ENCODE measurements at regions of chr1 and their contacts with region 1.

Region 1: DNA sequence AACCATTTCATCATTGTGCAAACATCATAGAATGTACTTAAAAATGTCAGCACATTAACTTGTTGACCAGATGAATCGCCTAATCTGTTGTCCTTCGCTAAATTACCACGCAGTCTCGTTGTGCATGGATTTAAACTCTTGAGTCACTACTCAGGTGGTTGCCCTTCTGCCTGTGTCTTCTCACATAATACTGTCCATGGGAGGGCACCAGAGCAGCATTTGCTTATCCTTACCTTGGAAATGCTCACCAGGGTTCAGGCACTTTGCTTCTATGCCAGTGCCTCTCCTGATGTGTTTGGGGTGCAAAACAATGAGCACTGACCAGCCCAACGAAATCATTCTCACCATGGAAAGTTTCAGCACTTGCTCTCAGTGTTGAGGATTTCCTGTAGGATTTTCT is 559.9 kb downstream of the RWDD3 start:
- DNase-seq: no peak
- ATAC-seq: no peak
- H3K4me3 ChIP-seq: no peak overlapping the region
- H3K27ac ChIP-seq: no peak overlapping the region
- H3K4me1 ChIP-seq: no peaks in the 10 kb centered on the region
- H3K27me3 ChIP-seq: no peaks in the 10 kb centered on the region
- CTCF ChIP-seq: 0 out of 2 replicates have a peak, but pooled peaks have one; percentile 13
- POLR2A ChIP-seq: no peak
- RAD21 ChIP-seq: no peak

Region 2: GRCh38 chr1:95744731-95745130 is 49.2 kb before region 1 on chr1:
- CTCF ChIA-PET with region 1: no interaction called
- POLR2A ChIA-PET with region 1: no interaction called
- dilution Hi-C with region 1: no loop called
- in situ Hi-C with region 1: no loop called
- intact Hi-C with region 1: loop called (anchors 5 kb)
- DNase-seq: no peak
- ATAC-seq: no peak
- H3K4me3 ChIP-seq: no peak overlapping the region
- H3K27ac ChIP-seq: no peak overlapping the region
- H3K4me1 ChIP-seq: no peaks in the 10 kb centered on the region
- H3K27me3 ChIP-seq: no peaks in the 10 kb centered on the region
- CTCF ChIP-seq: no peak
- POLR2A ChIP-seq: no peak
- RAD21 ChIP-seq: no peak

Measured in IMR-90 (cell line).